ENCODE measurements at regions of chr11 and their contacts with region 1.

Region 1: DNA sequence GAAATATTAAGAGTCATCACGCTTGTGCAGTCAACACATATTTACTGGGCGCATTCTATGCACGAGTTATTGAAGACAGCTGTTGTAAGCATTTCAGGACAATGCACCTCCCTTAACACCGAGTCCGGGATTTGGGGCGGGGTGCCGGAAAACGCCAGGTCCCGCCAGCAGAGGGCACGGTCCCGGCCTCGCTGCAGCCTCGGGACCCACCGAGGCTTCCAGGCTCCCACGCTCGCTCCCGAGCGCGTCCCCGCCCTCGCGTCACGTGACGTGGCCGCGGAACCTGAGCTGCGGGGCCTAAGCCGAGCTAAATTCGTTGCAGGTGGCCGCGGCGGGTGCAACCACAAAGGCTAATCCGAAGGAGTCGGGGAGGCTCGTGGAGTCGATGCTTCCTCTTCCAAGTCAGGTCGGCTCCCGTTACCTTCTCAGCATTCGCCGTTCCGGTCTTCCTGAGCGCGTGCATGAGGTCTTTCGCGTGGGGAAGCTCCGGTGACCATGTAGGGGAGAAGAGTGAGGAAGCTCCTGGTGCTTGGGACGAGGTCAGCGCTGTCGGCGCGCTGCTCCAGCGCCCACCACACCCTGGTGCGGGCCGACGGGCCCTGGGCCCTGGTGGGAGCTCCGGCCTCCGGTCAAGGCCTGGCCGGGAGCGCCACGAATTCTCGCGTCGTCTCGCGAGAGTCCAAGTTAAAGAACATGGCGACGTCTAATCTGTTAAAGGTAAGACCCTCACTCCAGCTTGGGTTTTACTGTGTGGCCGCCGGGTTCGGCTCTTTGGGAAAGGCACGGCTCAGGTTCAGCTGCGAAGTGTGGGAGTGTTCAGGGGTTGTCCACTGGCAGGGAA is at the start of gene CUL5:
- DNase-seq: peak; percentile 97 to 98
- H3K4me3 ChIP-seq: peak within 1 kb of the TSS; percentile 85
- H3K4me3 Mint-ChIP-seq: peak within 1 kb of the TSS; percentile 85
- H3K27ac Mint-ChIP-seq: peak within 1 kb of the TSS; percentile 99
- H3K4me1 ChIP-seq: peaks cover 17% of the 10 kb centered on the region
- H3K4me1 Mint-ChIP-seq: peaks cover 6% of the 10 kb centered on the region
- H3K27me3 ChIP-seq: no peaks in the 10 kb centered on the region
- H3K27me3 Mint-ChIP-seq: no peaks in the 10 kb centered on the region
- CTCF ChIP-seq: peak; percentile 97 to 99
- total RNA-seq, gene CUL5: 75.4 and 76.6 TPM in 2 replicates

Region 2: DNA sequence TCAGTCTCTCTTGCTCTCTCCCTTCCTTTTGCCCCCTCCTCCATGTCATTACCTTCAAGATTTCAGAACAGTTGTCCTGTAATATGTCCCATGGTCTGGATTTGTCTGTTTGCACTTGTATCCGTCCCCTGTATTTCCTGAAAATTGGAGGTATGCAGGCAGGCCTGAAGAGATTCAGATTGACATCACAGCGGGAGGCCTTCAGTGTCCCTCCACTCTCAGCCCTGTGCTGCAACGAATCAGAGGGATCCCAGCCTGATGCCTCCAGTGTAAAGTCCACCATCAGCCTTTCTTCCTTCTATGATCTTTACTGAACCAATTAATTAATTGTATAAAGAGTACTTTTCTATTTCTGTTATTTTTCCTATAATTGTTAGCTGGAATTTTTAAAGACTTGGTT is 360.6 kb before region 1 on chr11:
- CTCF ChIA-PET with region 1: no interaction called
- POLR2A ChIA-PET with region 1: no interaction called
- intact Hi-C with region 1: no loop called
- DNase-seq: no peak
- H3K4me3 ChIP-seq: no peak overlapping the region
- H3K4me3 Mint-ChIP-seq: no peak overlapping the region
- H3K27ac Mint-ChIP-seq: no peak overlapping the region
- H3K4me1 ChIP-seq: no peaks in the 10 kb centered on the region
- H3K4me1 Mint-ChIP-seq: no peaks in the 10 kb centered on the region
- H3K27me3 ChIP-seq: no peaks in the 10 kb centered on the region
- H3K27me3 Mint-ChIP-seq: peaks cover 22% of the 10 kb centered on the region
- CTCF ChIP-seq: no peak

Region 3: DNA sequence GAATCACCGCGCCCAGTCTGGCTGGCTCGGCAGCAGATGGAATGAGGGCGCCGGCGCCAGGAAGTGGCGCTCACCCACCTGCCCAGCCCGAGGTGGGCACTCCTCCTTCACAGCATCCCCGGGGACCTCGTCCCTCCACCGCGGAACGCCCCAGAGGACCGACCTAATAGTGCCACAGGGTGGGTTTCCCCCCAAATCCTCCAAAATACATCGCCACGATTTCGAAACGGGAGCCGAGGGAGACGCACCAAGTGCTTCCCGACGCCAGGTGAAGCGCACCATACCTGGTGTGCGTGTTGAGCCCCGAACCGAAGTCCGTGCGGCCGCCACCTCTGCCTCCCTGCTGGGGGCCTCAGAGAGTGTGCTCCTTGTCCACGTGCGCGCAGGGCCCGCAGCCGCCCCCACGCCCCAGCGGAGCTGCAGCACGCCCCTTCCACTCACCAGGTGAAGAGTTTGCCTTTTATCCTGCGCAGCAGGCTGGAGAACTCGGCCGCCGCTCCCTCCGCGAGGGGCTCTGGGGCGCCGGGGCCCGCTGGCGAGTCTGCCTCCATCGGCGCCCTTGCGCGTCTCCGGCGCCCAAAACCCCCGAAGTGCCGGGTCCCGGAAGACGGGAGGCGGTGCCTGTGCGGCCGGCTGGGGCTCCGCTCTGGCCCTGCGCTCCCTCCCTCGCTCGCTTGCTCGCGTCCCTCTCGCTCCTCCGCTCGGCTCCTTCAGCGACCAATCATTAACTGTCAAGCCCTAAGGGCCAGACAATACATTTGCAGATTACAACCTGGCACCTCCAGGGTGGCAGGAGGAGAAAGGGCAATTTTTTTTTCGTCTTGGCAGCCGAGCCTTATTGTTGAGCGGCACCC is 150.4 kb before region 1 on chr11 and contains the start of gene SLC35F2:
- CTCF ChIA-PET with region 1: no interaction called
- POLR2A ChIA-PET with region 1: interaction called, 5 read pairs
- intact Hi-C with region 1: loop called (anchors 2 kb)
- DNase-seq: peak; percentile 90 to 91
- H3K4me3 ChIP-seq: peak within 1 kb of the TSS; percentile 50
- H3K4me3 Mint-ChIP-seq: peak within 1 kb of the TSS; percentile 93
- H3K27ac Mint-ChIP-seq: peak within 1 kb of the TSS; percentile 85
- H3K4me1 ChIP-seq: peaks cover 5% of the 10 kb centered on the region
- H3K4me1 Mint-ChIP-seq: peaks cover 7% of the 10 kb centered on the region
- H3K27me3 ChIP-seq: no peaks in the 10 kb centered on the region
- H3K27me3 Mint-ChIP-seq: no peaks in the 10 kb centered on the region
- CTCF ChIP-seq: peak in 1 of 2 experiments; percentile 24
- total RNA-seq, gene SLC35F2: 42.5 and 44.9 TPM in 2 replicates

Region 4: DNA sequence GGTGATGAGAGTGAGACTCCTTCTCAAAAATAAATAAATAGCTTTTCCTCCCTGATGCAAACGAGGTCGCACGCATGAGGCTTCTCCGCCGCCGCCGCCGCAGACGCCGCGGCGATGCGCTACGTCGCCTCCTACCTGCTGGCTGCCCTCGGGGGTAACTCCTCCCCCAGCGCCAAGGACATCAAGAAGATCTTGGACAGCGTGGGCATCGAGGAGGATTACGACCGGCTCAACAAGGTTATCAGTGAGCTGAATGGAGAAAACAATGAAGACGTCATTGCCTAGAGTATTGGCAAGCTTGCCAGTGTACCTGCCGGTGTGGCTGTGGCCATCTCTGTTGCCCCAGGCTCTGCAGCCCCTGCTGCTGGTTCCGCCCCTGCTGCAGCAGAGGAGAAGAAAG is 100.6 kb before region 1 on chr11:
- CTCF ChIA-PET with region 1: no interaction called
- POLR2A ChIA-PET with region 1: no interaction called
- intact Hi-C with region 1: no loop called
- DNase-seq: no peak
- H3K4me3 ChIP-seq: no peak overlapping the region
- H3K4me3 Mint-ChIP-seq: no peak overlapping the region
- H3K27ac Mint-ChIP-seq: no peak overlapping the region
- H3K4me1 ChIP-seq: no peaks in the 10 kb centered on the region
- H3K4me1 Mint-ChIP-seq: no peaks in the 10 kb centered on the region
- H3K27me3 ChIP-seq: no peaks in the 10 kb centered on the region
- H3K27me3 Mint-ChIP-seq: peaks cover 4% of the 10 kb centered on the region
- CTCF ChIP-seq: no peak

Region 5: GRCh38 chr11:107962181-107962580 is 46.7 kb before region 1 on chr11:
- CTCF ChIA-PET with region 1: no interaction called
- POLR2A ChIA-PET with region 1: no interaction called
- intact Hi-C with region 1: no loop called
- DNase-seq: no peak
- H3K4me3 ChIP-seq: no peak overlapping the region
- H3K4me3 Mint-ChIP-seq: no peak overlapping the region
- H3K27ac Mint-ChIP-seq: no peak overlapping the region
- H3K4me1 ChIP-seq: 0 out of 2 replicates have a peak, but pooled peaks cover 5% of the 10 kb centered on the region
- H3K4me1 Mint-ChIP-seq: peaks cover 8% of the 10 kb centered on the region
- H3K27me3 ChIP-seq: 0 out of 2 replicates have a peak, but pooled peaks cover 4% of the 10 kb centered on the region
- H3K27me3 Mint-ChIP-seq: peaks cover 2% of the 10 kb centered on the region
- CTCF ChIP-seq: no peak

Region 6: DNA sequence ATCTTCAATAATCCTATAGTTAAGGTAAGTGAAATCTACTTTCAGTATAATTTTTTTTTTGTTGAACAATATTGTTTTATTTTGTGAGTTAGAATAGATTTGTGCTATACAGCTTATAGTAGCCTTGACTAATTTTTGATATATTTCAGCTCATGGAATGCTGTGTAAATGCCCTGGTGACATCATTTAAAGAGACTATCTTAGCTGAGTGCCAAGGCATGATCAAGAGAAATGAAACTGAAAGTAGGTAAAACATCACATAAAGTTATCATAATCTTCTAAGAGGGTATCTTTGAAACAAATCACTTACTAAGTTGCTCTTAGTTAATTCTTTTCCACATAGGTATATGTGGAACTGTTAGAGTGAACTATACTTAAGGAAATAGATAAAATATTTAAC is 61.1 kb after region 1 on chr11:
- CTCF ChIA-PET with region 1: interaction called, 3 read pairs
- POLR2A ChIA-PET with region 1: no interaction called
- intact Hi-C with region 1: loop called (anchors 2 kb)
- DNase-seq: no peak
- H3K4me3 ChIP-seq: no peak overlapping the region
- H3K4me3 Mint-ChIP-seq: no peak overlapping the region
- H3K27ac Mint-ChIP-seq: no peak overlapping the region
- H3K4me1 ChIP-seq: no peaks in the 10 kb centered on the region
- H3K4me1 Mint-ChIP-seq: no peaks in the 10 kb centered on the region
- H3K27me3 ChIP-seq: no peaks in the 10 kb centered on the region
- H3K27me3 Mint-ChIP-seq: no peaks in the 10 kb centered on the region
- CTCF ChIP-seq: no peak

Region 7: DNA sequence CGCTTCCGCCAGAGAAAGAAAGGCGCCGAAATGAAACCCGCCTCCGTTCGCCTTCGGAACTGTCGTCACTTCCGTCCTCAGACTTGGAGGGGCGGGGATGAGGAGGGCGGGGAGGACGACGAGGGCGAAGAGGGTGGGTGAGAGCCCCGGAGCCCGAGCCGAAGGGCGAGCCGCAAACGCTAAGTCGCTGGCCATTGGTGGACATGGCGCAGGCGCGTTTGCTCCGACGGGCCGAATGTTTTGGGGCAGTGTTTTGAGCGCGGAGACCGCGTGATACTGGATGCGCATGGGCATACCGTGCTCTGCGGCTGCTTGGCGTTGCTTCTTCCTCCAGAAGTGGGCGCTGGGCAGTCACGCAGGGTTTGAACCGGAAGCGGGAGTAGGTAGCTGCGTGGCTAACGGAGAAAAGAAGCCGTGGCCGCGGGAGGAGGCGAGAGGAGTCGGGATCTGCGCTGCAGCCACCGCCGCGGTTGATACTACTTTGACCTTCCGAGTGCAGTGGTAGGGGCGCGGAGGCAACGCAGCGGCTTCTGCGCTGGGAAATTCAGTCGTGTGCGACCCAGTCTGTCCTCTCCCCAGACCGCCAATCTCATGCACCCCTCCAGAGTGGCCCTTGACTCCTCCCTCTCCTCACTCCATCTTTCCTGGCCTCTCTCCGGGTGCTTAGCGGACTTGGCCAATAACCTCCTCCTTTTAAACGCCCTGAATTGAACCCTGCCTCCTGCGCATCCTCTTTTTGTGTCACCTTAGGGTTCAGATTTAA is 214.0 kb after region 1 on chr11 and contains the start of gene ATM:
- CTCF ChIA-PET with region 1: interaction called, 9 read pairs
- POLR2A ChIA-PET with region 1: interaction called, 7 read pairs
- intact Hi-C with region 1: loop called (anchors 2 kb)
- DNase-seq: peak; percentile 100
- H3K4me3 ChIP-seq: peak within 1 kb of the TSS; percentile 62
- H3K4me3 Mint-ChIP-seq: no peak within 1 kb of the TSS
- H3K27ac Mint-ChIP-seq: no peak within 1 kb of the TSS
- H3K4me1 ChIP-seq: peaks cover 19% of the 10 kb centered on the region
- H3K4me1 Mint-ChIP-seq: peaks cover 21% of the 10 kb centered on the region
- H3K27me3 ChIP-seq: no peaks in the 10 kb centered on the region
- H3K27me3 Mint-ChIP-seq: no peaks in the 10 kb centered on the region
- CTCF ChIP-seq: peak; percentile 86 to 98
- total RNA-seq, gene ATM: 77.1 and 77.9 TPM in 2 replicates

Region 8: GRCh38 chr11:108654994-108655631 is 646.2 kb after region 1 on chr11:
- CTCF ChIA-PET with region 1: no interaction called
- POLR2A ChIA-PET with region 1: no interaction called
- intact Hi-C with region 1: loop called (anchors 1 kb)
- DNase-seq: peak; percentile 64 to 74
- H3K4me3 ChIP-seq: no peak overlapping the region
- H3K4me3 Mint-ChIP-seq: no peak overlapping the region
- H3K27ac Mint-ChIP-seq: no peak overlapping the region
- H3K4me1 ChIP-seq: no peaks in the 10 kb centered on the region
- H3K4me1 Mint-ChIP-seq: no peaks in the 10 kb centered on the region
- H3K27me3 ChIP-seq: no peaks in the 10 kb centered on the region
- H3K27me3 Mint-ChIP-seq: peaks cover 6% of the 10 kb centered on the region
- CTCF ChIP-seq: peak; percentile 87 to 92